Prostate gland (tissue), 2 donors: ENCODE measurements at regions of chr3 and their contacts with region 1.

Region 1: GRCh38 chr3:130759699-130760338 is 13.2 kb upstream of the PIK3R4 start:
- DNase-seq: peak; percentile 62
- H3K4me3 ChIP-seq: no peak overlapping the region
- H3K27ac ChIP-seq: no peak overlapping the region
- H3K4me1 ChIP-seq: no peaks in the 10 kb centered on the region
- H3K27me3 ChIP-seq: no peaks in the 10 kb centered on the region
- CTCF ChIP-seq: peak; percentile 80 to 89 (median 84)
- POLR2A ChIP-seq: no peak

Region 2: GRCh38 chr3:131026321-131027178 is 266.7 kb after region 1 on chr3 and contains the starts of genes ASTE1 and NEK11:
- intact Hi-C with region 1: loop called (anchors 10 kb)
- DNase-seq: peak; percentile 88
- H3K4me3 ChIP-seq: peak within 1 kb of the TSS; percentile 48 to 61
- H3K27ac ChIP-seq: peak within 1 kb of the TSS; percentile 82 to 86
- H3K4me1 ChIP-seq: no peaks in the 10 kb centered on the region
- H3K27me3 ChIP-seq: no peaks in the 10 kb centered on the region
- CTCF ChIP-seq: peak in 1 of 4 experiments; percentile 5
- POLR2A ChIP-seq: peak; percentile 43
- total RNA-seq, gene ASTE1: 6.1 to 7.7 TPM
- total RNA-seq, gene NEK11: 7.4 to 14.0 TPM